ENCODE measurements at regions of chr10 and their contacts with region 1.

Region 1: DNA sequence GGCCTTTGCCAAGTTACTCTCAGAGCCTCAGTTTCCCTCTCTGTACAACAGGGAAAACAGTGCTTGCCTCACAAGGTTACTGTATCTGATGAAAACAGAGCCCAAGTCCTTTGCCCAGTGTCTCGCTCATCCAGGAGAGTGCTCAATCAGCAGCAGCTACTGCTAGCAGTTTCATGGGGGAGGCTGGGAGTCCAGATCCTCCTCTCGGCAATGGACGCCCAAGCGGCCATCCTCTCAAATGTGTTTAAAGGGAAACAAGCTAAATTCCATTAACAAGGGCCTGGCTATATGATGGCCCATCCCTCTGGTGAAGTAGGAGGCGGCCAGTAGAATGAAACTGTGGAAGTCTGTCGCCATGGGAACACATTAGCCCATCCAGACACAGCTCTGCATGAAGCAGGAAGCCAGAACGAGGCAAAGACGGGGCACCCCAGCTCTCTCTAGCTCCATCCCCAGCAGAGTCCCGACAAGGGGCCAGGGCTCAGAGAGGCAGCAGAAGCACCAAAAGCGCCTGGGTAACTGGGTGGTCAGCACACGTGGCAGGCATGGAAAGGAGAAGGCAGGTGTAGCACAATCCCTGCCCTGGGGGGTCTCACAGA is 35.2 kb downstream of the FAM53B start:
- DNase-seq: no peak
- H3K4me3 ChIP-seq: no peak overlapping the region
- H3K27me3 ChIP-seq: no peaks in the 10 kb centered on the region
- CTCF ChIP-seq: no peak

Region 2: DNA sequence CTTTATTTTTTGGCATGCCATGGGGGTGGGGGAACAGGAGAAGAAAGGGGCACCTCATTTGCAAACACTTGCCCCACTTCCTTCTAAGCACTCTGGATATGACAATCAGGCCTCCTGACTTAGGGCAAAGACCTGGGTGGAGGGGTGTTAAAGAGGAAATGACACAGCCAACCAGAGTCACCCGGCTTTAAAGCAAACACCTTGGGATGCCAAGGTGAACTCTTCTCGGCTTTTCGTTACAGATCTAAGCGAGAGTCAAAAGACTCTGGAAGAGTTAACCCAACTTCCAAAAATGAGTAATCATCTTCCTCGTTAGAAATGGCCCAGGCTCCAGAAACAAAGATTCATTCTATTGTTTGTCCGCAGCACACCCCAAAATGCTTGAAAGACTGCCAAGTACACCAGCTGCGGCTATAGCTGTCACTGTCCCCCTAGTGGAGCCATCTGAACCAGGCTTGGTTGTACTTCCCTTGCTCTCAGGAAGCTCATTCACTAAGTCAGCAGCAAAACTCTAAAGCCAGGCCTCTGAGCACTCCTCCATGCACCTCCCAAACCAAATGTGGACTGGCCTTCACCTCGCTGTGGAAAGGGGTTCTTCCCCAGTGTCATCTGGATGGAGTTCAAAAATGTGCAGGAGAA is 10.3 kb after region 1 on chr10:
- CTCF ChIA-PET with region 1: interaction called, 13 read pairs
- POLR2A ChIA-PET with region 1: interaction called, 3 read pairs
- DNase-seq: no peak
- H3K4me3 ChIP-seq: no peak overlapping the region
- H3K27me3 ChIP-seq: no peaks in the 10 kb centered on the region
- CTCF ChIP-seq: peak; percentile 58